CD14-positive monocyte (primary cell): ENCODE measurements at regions of chr5 and their contacts with region 1.

Region 1: DNA sequence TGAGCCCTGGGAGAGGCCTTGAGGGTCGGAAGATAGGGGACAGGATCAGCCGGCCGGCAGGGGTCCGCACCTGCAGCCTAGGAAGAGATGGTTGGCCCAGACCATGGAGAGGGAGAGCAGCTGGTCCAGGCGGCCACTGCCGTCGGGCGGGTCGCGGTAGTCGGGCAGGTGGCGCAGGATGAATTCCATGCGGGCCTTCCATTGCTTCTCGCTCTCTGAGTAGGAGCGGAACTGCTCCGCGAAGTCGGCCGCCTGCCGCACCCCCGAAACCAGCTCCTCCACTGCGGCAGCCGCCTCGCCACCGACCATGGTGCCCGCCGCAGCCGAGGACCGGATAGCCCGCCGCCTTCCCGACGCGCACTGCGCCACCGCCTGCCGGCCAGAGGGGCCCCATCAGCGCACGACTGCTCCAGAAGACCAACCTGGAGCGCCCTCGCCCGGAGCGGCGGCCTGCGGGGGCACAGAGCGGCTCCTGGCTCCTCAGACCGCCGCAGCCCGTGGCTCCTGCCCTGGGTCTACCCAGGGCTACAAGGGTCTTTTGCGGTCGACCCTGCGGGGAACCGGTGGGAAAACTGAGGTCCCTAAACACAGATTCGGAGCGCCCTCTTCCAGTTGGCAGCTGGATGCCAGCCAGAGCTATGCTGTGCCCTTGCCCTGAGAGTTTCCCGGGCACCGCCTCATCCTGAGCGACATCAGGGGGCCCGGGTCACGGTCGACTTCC is at the start of gene CDKN2AIPNL:
- DNase-seq: peak; percentile 72 to 80 (median 75)
- H3K4me3 ChIP-seq: peak within 1 kb of the TSS; percentile 60 to 87 (median 86)
- H3K4me3 Mint-ChIP-seq: peak within 1 kb of the TSS; percentile 89 to 96
- H3K27ac ChIP-seq: peak within 1 kb of the TSS; percentile 0 to 56
- H3K27ac Mint-ChIP-seq: peak within 1 kb of the TSS; percentile 75 to 88 (median 85)
- H3K4me1 ChIP-seq: peaks cover 17 to 21% of the 10 kb centered on the region in 2 donors
- H3K4me1 Mint-ChIP-seq: peaks cover 29% of the 10 kb centered on the region
- H3K27me3 ChIP-seq: no peaks in the 10 kb centered on the region
- H3K27me3 Mint-ChIP-seq: peaks cover 0 to 3% (median 2%) of the 10 kb centered on the region in 3 donors
- CTCF ChIP-seq: peak; percentile 72
- polyA plus RNA-seq, gene CDKN2AIPNL: 6.9 to 20.0 (median 15.0) TPM

Region 2: GRCh38 chr5:134263801-134264200 is 147.9 kb before region 1 on chr5:
- intact Hi-C with region 1: no loop called
- DNase-seq: no peak
- H3K4me3 ChIP-seq: no peak overlapping the region
- H3K4me3 Mint-ChIP-seq: no peak overlapping the region
- H3K27ac ChIP-seq: no peak overlapping the region
- H3K27ac Mint-ChIP-seq: no peak overlapping the region
- H3K4me1 ChIP-seq: no peaks in the 10 kb centered on the region
- H3K4me1 Mint-ChIP-seq: no peaks in the 10 kb centered on the region
- H3K27me3 ChIP-seq: peaks cover 2 to 4% of the 10 kb centered on the region in 2 donors
- H3K27me3 Mint-ChIP-seq: peaks cover 8 to 11% (median 9%) of the 10 kb centered on the region in 3 donors
- CTCF ChIP-seq: no peak

Region 3: GRCh38 chr5:134304311-134304710 is 107.4 kb before region 1 on chr5:
- intact Hi-C with region 1: no loop called
- DNase-seq: no peak
- H3K4me3 ChIP-seq: no peak overlapping the region
- H3K4me3 Mint-ChIP-seq: no peak overlapping the region
- H3K27ac ChIP-seq: no peak overlapping the region
- H3K27ac Mint-ChIP-seq: no peak overlapping the region
- H3K4me1 ChIP-seq: no peaks in the 10 kb centered on the region
- H3K4me1 Mint-ChIP-seq: no peaks in the 10 kb centered on the region
- H3K27me3 ChIP-seq: no peaks in the 10 kb centered on the region
- H3K27me3 Mint-ChIP-seq: peaks cover 0 to 3% (median 2%) of the 10 kb centered on the region in 3 donors
- CTCF ChIP-seq: no peak

Region 4: GRCh38 chr5:134451936-134452505 is 40.3 kb after region 1 on chr5:
- intact Hi-C with region 1: loop called in 1 of 2 experiments (anchors 5 kb)
- DNase-seq: no peak
- H3K4me3 ChIP-seq: no peak overlapping the region
- H3K4me3 Mint-ChIP-seq: no peak overlapping the region
- H3K27ac ChIP-seq: no peak overlapping the region
- H3K27ac Mint-ChIP-seq: no peak overlapping the region
- H3K4me1 ChIP-seq: peaks cover 3 to 7% of the 10 kb centered on the region in 2 donors
- H3K4me1 Mint-ChIP-seq: peaks cover 8% of the 10 kb centered on the region
- H3K27me3 ChIP-seq: no peaks in the 10 kb centered on the region
- H3K27me3 Mint-ChIP-seq: peaks cover 0 to 1% (median 0%) of the 10 kb centered on the region in 3 donors
- CTCF ChIP-seq: no peak

Region 5: GRCh38 chr5:134465816-134466240 is 54.1 kb after region 1 on chr5:
- intact Hi-C with region 1: loop called in 1 of 2 experiments (anchors 10 kb)
- DNase-seq: peak; percentile 50 to 84 (median 63)
- H3K4me3 ChIP-seq: peak overlapping the region; percentile 43 to 81 (median 61)
- H3K4me3 Mint-ChIP-seq: peak overlapping the region; percentile 80 to 91
- H3K27ac ChIP-seq: peak overlapping the region; percentile 74 to 90
- H3K27ac Mint-ChIP-seq: peak overlapping the region; percentile 82 to 94 (median 91)
- H3K4me1 ChIP-seq: peaks cover 35 to 38% of the 10 kb centered on the region in 2 donors
- H3K4me1 Mint-ChIP-seq: peaks cover 34% of the 10 kb centered on the region
- H3K27me3 ChIP-seq: no peaks in the 10 kb centered on the region
- H3K27me3 Mint-ChIP-seq: peaks cover 1 to 9% (median 2%) of the 10 kb centered on the region in 3 donors
- CTCF ChIP-seq: no peak

Region 6: GRCh38 chr5:134577796-134578363 is 166.2 kb after region 1 on chr5:
- intact Hi-C with region 1: loop called (anchors 5 to 10 kb)
- DNase-seq: peak; percentile 67 to 79 (median 72)
- H3K4me3 ChIP-seq: no peak overlapping the region
- H3K4me3 Mint-ChIP-seq: no peak overlapping the region
- H3K27ac ChIP-seq: no peak overlapping the region
- H3K27ac Mint-ChIP-seq: peak overlapping the region in 2 of 7 donors; percentile 13 to 46
- H3K4me1 ChIP-seq: no peaks in the 10 kb centered on the region
- H3K4me1 Mint-ChIP-seq: peaks cover 2% of the 10 kb centered on the region
- H3K27me3 ChIP-seq: no peaks in the 10 kb centered on the region
- H3K27me3 Mint-ChIP-seq: no peaks in the 10 kb centered on the region
- CTCF ChIP-seq: peak; percentile 91